Dorsolateral prefrontal cortex (tissue), 120 donors: ENCODE measurements at regions of chr6 and their contacts with region 1.

Region 1: GRCh38 chr6:11093589-11094410 is at the start of gene SMIM13:
- DNase-seq: peak; percentile 96 to 99 (median 98)
- H3K4me3 ChIP-seq: peak within 1 kb of the TSS; percentile 59 to 99 (median 95)
- H3K27ac ChIP-seq: peak within 1 kb of the TSS; percentile 80 to 99 (median 98)
- H3K27me3 ChIP-seq: no peaks in the 10 kb centered on the region
- CTCF ChIP-seq: peak in 54 of 56 donors; percentile 18 to 75 (median 56)
- total RNA-seq, gene SMIM13: 31.0 to 65.1 (median 50.3) TPM

Region 2: GRCh38 chr6:11144393-11144851 is 50.6 kb after region 1 on chr6:
- intact Hi-C with region 1: loop called in 1 of 2 experiments (anchors 5 kb)
- DNase-seq: peak; percentile 70 to 84 (median 76)
- H3K4me3 ChIP-seq: peak overlapping the region in 8 of 59 donors; percentile 3 to 47 (median 22)
- H3K27ac ChIP-seq: no peak overlapping the region
- H3K27me3 ChIP-seq: no peaks in the 10 kb centered on the region
- CTCF ChIP-seq: peak; percentile 85 to 99 (median 95)

Region 3: GRCh38 chr6:11232193-11232769 is 138.5 kb after region 1 on chr6 and contains the start of gene NEDD9:
- intact Hi-C with region 1: loop called in 1 of 2 experiments (anchors 5 kb)
- DNase-seq: peak; percentile 74 to 97 (median 93)
- H3K4me3 ChIP-seq: peak within 1 kb of the TSS; percentile 41 to 91 (median 69)
- H3K27ac ChIP-seq: peak within 1 kb of the TSS in 57 of 59 donors; percentile 13 to 92 (median 74)
- H3K27me3 ChIP-seq: no peaks in the 10 kb centered on the region
- CTCF ChIP-seq: peak in 26 of 56 donors; percentile 4 to 40 (median 22)
- total RNA-seq, gene NEDD9: 7.7 to 36.0 (median 17.1) TPM

Region 4: DNA sequence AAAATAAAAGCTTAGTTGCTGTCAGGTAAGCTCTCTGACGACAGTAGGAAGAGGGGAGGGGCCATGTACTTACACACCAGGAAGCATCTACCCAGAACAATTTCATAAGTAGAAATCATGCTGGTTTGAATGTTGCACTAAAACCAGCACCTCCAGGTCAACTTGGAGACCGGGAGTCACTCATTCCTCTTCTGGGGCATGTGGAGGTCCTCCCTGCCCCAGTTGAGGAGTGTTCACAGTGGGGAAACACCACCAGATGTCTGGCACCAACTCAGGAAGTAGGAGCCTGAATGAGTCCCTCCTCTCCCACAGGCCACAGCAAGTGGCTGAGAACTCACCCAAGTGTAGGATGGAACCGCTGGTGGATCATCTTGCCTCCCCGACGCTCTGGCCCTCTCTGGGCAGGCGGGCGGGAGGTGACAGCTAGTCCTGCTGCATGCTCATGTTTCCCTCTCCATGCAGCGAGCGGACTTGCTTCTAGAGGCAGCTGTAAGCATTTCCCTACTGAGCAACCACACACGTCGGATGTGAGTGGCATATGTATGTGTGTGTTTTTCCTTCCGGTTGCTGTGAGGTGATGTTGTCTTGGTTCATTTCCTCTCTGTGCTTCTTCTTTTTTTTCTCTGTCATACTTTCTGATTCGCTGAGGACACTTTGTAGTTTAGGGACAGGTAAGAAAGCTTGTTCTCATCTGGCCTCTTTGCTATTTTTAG is 288.2 kb after region 1 on chr6:
- intact Hi-C with region 1: no loop called
- DNase-seq: no peak
- H3K4me3 ChIP-seq: peak overlapping the region in 4 of 59 donors; percentile 0 to 35 (median 17)
- H3K27ac ChIP-seq: peak overlapping the region in 8 of 59 donors; percentile 2 to 60 (median 35)
- H3K27me3 ChIP-seq: peaks cover 0 to 5% (median 0%) of the 10 kb centered on the region in 45 donors
- CTCF ChIP-seq: no peak

Region 5: DNA sequence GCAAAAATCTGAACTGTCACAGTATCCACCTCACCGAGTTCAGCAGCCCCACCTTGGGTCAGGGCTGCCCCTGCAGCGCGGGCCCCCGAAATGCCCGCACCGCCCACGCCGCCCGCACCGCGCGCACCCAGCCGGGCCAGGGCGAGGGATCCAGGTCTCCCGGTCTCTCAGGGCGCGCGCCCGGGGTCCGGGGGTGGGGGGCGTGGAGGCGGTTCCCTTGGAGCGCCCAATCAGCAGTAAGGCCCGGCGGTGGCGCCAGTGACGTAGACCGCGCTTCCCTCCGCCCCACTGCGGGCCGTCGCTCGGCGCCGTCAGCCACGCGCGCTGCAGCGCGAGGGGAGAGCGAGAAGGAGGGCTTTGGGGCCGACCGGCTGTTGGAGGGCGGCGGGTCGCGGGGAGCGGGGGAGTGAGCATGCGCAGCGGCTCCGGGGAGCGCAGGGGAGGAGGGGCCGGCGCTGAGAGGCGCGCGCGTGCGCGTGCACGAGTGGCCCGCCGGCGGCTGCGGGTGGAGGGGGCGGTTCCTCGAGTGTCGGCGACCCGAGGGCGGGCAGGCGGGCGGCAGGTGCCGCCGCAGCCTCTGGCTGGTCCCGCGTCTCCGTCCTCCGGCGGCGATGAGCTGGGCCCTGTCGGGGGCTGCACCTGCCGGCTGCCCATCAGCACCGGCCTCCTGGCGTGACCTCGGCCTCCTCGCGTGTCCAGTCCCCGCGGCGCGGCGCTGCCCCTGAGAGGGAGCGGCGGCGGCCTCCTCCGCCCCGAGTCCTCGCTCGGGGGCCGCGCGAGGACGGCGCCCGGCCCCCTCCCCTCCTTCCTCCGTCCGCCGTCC is 443.6 kb after region 1 on chr6 and contains the start of gene TMEM170B:
- intact Hi-C with region 1: loop called in 1 of 2 experiments (anchors 5 kb)
- DNase-seq: peak; percentile 93 to 97 (median 96)
- H3K4me3 ChIP-seq: peak within 1 kb of the TSS; percentile 70 to 99 (median 92)
- H3K27ac ChIP-seq: peak within 1 kb of the TSS; percentile 0 to 97 (median 91)
- H3K27me3 ChIP-seq: no peaks in the 10 kb centered on the region
- CTCF ChIP-seq: peak in 21 of 56 donors; percentile 2 to 64 (median 27)
- total RNA-seq, gene TMEM170B: 19.1 to 53.1 (median 33.6) TPM